ENCODE measurements at regions of chr1 and their contacts with region 1.

Region 1: DNA sequence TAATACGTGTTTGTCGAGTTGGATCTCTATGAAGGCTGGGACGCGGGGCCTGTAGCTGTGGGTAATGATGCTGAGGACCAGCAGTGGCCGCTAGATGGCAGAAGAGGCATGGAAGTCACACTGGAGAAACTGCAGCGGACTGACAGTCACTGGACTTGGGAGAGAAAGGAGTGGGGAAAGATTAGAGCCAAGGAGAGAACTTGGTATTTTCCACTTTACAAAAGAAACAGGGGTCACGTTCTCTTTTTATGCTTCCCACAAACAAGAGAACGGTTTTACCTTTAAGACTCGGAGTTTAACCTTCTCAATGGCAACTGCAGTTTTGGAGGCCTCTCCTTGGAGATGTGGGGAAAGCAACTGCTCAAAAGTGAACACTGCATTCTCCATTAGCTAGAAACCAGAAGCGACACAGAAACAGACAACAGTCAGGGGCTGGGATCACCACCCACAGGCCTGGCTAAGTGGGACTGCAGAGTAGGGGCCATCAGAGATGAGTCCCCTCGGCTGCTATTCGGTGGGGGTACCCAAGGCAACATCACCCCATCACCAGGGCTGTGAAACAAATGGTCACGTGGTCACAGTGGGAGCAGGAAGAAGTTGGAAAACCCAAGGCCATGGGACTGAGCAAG is 51.1 kb upstream of the EDEM3 start:
- DNase-seq: peak; percentile 72
- ATAC-seq: peak; percentile 100
- H3K4me3 ChIP-seq: no peak overlapping the region
- H3K27ac ChIP-seq: no peak overlapping the region
- H3K4me1 ChIP-seq: 0 out of 4 replicates have a peak, but pooled peaks cover 0 to 3% of the 10 kb centered on the region in 2 experiments
- H3K27me3 ChIP-seq: no peaks in the 10 kb centered on the region
- CTCF ChIP-seq: peak; percentile 76 to 93 (median 92)
- POLR2A ChIP-seq: no peak
- RAD21 ChIP-seq: peak; percentile 97

Region 2: GRCh38 chr1:184792450-184792969 is 13.3 kb before region 1 on chr1:
- CTCF ChIA-PET with region 1: interaction called, 12 read pairs
- POLR2A ChIA-PET with region 1: no interaction called
- RAD21 ChIA-PET with region 1: no interaction called
- intact Hi-C with region 1: no loop called
- DNase-seq: peak; percentile 75
- ATAC-seq: peak; percentile 88
- H3K4me3 ChIP-seq: peak overlapping the region in 1 of 2 experiments; percentile 37; a peak in 2 of 4 replicates
- H3K27ac ChIP-seq: peak overlapping the region; percentile 24
- H3K4me1 ChIP-seq: peaks cover 12 to 28% of the 10 kb centered on the region in 2 experiments
- H3K27me3 ChIP-seq: no peaks in the 10 kb centered on the region
- CTCF ChIP-seq: no peak
- POLR2A ChIP-seq: no peak
- RAD21 ChIP-seq: 0 out of 2 replicates have a peak, but pooled peaks have one; percentile 19

Region 3: GRCh38 chr1:184982002-184982954 is 176.5 kb after region 1 on chr1:
- CTCF ChIA-PET with region 1: interaction called, 53 read pairs
- POLR2A ChIA-PET with region 1: no interaction called
- RAD21 ChIA-PET with region 1: interaction called, 6 to 7 read pairs
- intact Hi-C with region 1: loop called (anchors 1 kb)
- DNase-seq: peak; percentile 37
- ATAC-seq: peak; percentile 99
- H3K4me3 ChIP-seq: no peak overlapping the region
- H3K27ac ChIP-seq: no peak overlapping the region
- H3K4me1 ChIP-seq: no peaks in the 10 kb centered on the region
- H3K27me3 ChIP-seq: no peaks in the 10 kb centered on the region
- CTCF ChIP-seq: peak; percentile 67 to 86 (median 85)
- POLR2A ChIP-seq: no peak
- RAD21 ChIP-seq: peak; percentile 87

Measured in HCT116 (cell line).